ENCODE measurements at regions of chr17 and their contacts with region 1.

Region 1: DNA sequence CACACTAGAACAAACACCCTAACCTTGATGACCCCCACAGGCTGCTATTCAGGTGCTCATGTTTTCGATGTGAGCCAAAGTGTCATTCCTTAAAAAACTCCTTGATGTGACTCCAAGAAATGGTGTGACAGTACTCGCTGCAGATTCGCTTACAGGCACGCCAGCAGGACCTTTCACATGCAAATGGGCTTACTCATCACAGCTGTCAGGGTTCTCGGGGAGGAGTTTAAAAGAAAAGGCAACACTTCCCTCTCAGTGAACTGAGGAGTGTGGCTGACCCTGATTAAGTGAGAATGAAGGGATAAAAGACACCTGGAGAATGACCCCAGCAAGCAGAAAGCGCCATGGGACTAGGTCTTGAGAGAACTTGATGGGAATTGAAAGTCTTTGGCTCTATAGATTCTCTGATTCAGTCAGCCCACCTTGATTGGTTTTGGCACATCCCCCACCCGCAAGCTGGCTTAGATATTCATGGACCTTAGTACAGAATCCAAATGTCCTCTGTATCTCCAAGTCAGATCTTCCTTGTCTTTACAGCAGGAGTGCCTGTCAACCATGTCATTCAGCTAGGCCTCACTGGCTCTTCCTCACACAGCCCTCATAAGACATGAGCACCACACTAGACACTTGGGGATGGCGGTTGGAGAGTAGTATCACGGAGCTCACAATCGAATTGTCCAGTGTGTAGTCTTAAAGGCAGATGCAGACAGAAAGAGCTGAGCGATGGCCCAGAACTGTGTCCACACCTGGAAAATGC is 82.6 kb downstream of the HIC1 start:
- H3K4me3 Mint-ChIP-seq: no peak overlapping the region
- H3K27ac Mint-ChIP-seq: peak overlapping the region; percentile 79
- H3K4me1 Mint-ChIP-seq: peaks cover 29% of the 10 kb centered on the region
- H3K27me3 Mint-ChIP-seq: no peaks in the 10 kb centered on the region

Region 2: GRCh38 chr17:2122641-2123302 is 14.7 kb before region 1 on chr17:
- intact Hi-C with region 1: loop called (anchors 1 kb)
- H3K4me3 Mint-ChIP-seq: peak overlapping the region; percentile 62
- H3K27ac Mint-ChIP-seq: peak overlapping the region; percentile 90
- H3K4me1 Mint-ChIP-seq: peaks cover 65% of the 10 kb centered on the region
- H3K27me3 Mint-ChIP-seq: no peaks in the 10 kb centered on the region

Region 3: DNA sequence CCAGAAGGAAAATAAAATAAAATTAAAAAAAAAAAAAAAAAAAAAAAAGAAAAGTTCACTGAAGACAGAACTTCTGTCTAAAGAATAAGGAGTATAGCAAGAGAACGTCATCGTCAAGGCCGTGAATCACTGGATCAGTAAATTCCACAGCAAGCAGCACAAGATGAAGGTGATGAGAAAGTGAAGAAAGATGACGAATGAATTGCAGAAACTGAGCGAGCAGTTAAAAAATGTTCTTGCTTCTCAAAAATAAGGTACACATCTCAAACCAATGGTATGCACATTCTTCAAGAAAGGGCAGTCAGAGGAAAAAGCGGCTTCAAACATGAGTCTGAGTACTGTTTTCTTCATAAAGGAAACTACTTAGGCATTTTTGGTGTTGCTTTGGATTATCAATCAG is 61.4 kb after region 1 on chr17:
- intact Hi-C with region 1: no loop called
- H3K4me3 Mint-ChIP-seq: no peak overlapping the region
- H3K27ac Mint-ChIP-seq: no peak overlapping the region
- H3K4me1 Mint-ChIP-seq: peaks cover 10% of the 10 kb centered on the region
- H3K27me3 Mint-ChIP-seq: no peaks in the 10 kb centered on the region

Region 4: DNA sequence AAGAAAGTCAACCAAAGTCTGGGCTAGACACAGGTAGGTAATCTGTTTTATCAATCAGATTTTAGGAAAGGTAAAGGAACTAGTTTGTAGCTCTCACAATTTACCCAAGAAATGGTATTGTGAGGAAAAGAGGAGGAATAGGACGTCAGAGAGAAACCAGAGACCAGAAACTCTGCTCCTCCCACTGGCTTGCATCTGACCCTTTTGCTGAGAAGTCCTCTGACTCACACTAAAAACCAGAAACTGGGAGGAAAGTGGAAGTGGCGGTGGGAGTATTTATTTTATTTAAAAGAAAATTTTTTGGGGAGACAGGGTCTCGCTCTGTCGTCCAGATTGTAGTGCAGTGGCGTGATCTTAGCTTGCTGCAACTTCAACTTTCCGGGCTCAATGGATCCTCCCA is 301.3 kb after region 1 on chr17:
- intact Hi-C with region 1: no loop called
- H3K4me3 Mint-ChIP-seq: peak overlapping the region; percentile 6
- H3K27ac Mint-ChIP-seq: peak overlapping the region; percentile 84
- H3K4me1 Mint-ChIP-seq: peaks cover 68% of the 10 kb centered on the region
- H3K27me3 Mint-ChIP-seq: no peaks in the 10 kb centered on the region